Heart left ventricle (tissue), 16 donors: ENCODE measurements at regions of chr22 and their contacts with region 1.

Region 1: DNA sequence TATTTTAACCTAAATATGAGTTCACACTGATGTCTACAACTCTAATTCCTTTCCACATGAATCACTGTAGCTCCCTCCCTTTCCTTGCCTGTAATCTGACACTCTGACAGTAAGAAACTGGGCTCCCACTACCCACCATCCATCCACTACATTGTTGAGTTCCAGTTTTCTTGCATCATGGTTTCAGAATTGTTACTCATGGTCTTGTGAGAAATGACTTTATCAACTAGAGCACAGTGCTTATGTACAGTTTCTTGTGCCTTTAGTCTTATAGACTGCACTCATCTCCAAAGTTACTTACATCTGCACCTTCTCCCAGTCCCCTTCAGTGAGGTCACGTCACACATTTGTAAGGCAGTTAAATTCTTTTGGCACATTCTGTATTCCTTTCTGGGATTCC is 78.6 kb downstream of the RTL6 start:
- DNase-seq: no peak
- ATAC-seq: no peak
- H3K4me3 ChIP-seq: no peak overlapping the region
- H3K27ac ChIP-seq: no peak overlapping the region
- H3K4me1 ChIP-seq: peaks cover 0 to 18% (median under 1%) of the 10 kb centered on the region in 12 donors
- H3K27me3 ChIP-seq: no peaks in the 10 kb centered on the region
- CTCF ChIP-seq: no peak
- POLR2A ChIP-seq: no peak

Region 2: DNA sequence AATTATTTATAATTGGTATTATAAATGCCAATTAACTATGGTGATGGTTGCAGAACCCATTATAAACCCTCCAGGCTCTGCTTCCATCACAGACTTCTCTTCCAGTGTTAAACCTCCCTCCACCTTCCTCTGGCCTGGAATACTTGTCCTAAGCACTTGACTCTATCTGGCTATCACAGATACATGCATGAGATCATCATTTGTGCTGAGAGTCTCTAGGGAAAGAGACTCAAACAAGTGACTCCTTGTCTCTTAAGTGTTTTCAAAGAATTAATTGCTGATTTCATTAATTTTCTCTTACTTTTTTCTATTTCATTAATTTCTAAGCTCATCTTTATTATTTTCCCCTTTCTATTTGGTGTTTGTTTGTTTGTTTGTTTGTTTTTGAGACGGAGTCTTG is 49.5 kb after region 1 on chr22:
- intact Hi-C with region 1: loop called in 1 of 10 experiments (anchors 5 kb)
- DNase-seq: no peak
- ATAC-seq: no peak
- H3K4me3 ChIP-seq: no peak overlapping the region
- H3K27ac ChIP-seq: no peak overlapping the region
- H3K4me1 ChIP-seq: no peaks in the 10 kb centered on the region
- H3K27me3 ChIP-seq: no peaks in the 10 kb centered on the region
- CTCF ChIP-seq: no peak
- POLR2A ChIP-seq: no peak